OCI-LY7 (cell line): ENCODE measurements at regions of chr1 and their contacts with region 1.

Region 1: DNA sequence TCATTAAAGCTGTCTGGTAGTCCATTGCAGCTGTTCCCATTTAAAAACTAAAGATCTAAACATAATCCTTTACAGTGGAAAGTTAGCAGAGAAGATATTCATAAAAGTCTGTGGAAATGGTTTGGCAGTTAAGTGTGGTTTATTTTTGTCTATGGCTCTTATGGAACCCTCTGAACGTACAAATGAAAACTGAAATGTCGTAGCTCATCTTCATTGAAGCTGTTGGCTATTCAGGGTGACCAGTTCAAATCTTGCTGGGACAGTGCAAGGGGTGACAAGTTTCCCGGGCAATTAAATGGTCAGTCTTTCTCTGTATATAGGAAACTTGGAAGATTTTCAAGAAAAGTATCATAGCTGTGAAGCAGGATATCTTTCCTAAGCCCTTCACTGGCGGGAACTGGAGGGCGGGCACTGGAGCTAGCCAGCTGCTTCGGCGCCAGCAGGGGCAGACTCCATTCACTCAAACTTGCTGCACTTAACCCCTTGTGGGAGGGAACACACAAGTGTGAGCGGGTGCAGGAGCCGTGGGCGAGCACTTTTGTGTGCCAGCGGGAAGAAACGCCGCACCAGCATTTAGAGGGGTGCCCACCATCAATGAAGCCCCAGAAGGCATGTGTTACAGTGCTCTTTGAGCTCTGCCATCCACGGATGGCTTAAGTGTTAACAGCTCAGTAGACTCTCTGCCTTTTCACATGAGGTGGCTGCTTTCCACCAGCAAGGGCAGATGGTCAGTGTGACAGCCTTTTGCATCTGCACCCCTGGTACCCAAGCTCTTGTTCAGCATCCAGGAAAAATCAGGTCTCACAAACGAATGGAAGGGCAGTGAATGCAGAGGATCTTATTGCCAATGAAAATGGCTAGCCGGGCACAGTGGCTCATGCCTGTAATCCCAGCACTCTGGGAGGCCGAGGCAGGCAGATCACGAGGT is 232.1 kb upstream of the KAZN start:
- DNase-seq: no peak
- H3K4me3 ChIP-seq: no peak overlapping the region
- H3K27ac ChIP-seq: peak overlapping the region; percentile 50
- H3K4me1 ChIP-seq: peaks cover 83% of the 10 kb centered on the region
- CTCF ChIP-seq: peak; percentile 37; the same call in 1 of the 2 replicates

Region 2: GRCh38 chr1:14254251-14254650 is 112.1 kb before region 1 on chr1:
- CTCF ChIA-PET with region 1: no interaction called
- POLR2A ChIA-PET with region 1: no interaction called
- intact Hi-C with region 1: loop called (anchors 5 kb)
- DNase-seq: peak; percentile 99
- H3K4me3 ChIP-seq: peak overlapping the region; percentile 48
- H3K27ac ChIP-seq: peak overlapping the region; percentile 95
- H3K4me1 ChIP-seq: peaks cover 81% of the 10 kb centered on the region
- CTCF ChIP-seq: no peak

Region 3: GRCh38 chr1:14435368-14436023 is 69.1 kb after region 1 on chr1:
- CTCF ChIA-PET with region 1: no interaction called
- POLR2A ChIA-PET with region 1: no interaction called
- intact Hi-C with region 1: no loop called
- DNase-seq: no peak
- H3K4me3 ChIP-seq: no peak overlapping the region
- H3K27ac ChIP-seq: no peak overlapping the region
- H3K4me1 ChIP-seq: peaks cover 7% of the 10 kb centered on the region
- CTCF ChIP-seq: peak; percentile 60